Cardiac septum (tissue), 1 donor: ENCODE measurements at regions of chr2 and their contacts with region 1.

Region 1: DNA sequence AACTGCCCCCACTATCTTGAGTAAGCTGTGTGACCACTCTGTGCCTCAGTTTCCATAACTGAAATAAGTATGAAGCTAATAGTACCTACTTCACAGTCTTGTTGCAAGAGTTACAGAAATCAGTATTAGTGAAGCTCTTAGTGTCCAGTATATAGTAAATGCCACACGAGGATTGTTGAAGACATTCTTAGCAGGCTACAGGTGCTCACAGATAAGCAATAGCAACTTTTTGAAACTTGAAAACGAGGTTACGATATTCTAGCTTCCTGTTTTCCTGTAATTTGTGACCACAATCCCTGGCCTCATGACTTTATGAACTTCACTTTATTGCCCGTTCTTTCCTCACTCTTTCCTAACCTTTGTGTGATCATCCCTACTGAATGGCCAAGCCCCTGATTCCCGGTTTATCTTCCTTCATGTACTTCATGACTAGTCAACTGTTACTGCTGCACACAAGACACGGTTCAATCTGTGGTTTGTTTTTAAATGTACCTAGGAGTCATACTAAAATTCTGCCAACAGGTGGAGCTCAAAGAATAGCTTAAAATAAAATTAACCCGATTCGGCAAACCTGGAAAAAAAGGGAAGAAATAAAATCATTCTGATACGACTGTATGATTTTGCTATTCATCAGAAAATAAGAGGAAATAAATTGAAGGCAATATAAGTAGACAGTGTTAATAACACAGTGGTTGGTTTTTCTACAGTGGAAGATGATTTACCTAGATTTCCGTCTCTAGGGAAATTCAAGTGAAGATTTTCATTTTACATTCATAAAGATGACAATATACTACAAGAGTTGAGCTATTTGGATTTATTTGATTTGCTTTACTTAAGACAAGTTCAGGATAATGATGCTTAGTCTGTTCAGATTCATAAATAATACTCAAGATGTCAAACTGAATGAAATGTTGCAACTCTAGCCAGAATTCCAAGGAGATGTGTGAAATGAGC is 38.1 kb upstream of the STAT1 start:
- DNase-seq: no peak

Region 2: DNA sequence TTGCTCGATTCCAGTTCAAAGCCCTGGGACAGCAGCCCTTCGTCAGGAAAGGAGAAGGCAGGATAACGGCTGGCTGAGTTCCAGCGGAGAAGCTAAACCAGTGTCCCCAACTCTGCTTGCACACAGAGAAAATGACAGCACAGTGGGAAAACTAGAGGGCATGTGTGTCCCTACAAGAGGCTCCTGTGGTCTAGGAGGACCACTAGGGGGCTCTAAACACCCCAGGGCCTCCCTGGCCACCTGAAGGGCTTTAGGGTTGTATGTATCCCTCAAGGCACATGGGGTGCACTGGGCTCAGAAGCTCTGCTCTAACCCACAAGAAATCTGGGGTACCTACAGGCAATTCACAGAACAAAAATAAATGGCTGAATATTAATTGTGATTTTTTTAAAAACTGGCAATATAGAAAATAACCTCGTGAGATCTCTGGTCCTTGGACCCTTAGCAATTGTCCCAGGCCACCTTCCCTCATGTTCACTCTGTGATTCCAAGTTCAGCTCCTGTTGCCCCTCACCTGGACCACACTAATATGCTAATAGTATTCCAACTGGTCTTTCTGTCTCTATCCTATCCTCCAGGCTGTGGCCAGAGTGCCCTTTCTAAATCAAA is 55.7 kb before region 1 on chr2:
- intact Hi-C with region 1: no loop called
- DNase-seq: no peak

Region 3: DNA sequence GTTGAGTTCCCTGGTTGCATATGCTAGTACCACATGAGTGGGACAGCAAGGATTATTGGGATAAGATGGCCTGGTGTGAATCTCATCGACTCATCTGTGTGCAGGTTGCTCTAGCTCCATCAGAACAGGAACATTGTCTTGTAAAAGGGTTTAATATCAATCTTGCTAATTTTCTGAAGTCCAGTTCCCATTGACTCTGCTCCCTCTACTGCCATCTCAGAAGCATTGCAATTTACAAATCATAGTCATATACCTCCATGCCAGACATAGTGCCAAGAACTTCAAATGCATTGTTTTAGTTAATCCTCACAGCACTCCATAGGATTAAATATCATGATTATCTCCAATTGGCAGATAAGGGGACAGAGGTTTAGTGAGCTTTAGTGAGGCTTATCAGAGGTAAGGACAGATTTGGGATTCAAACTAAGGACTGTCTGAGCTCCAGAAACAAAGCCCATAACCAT is 103.5 kb after region 1 on chr2:
- intact Hi-C with region 1: loop called (anchors 2 kb)
- DNase-seq: no peak

Region 4: GRCh38 chr2:191521608-191522208 is 469.6 kb after region 1 on chr2:
- intact Hi-C with region 1: loop called (anchors 5 kb)
- DNase-seq: no peak